GM10248 (cell line): ENCODE measurements at regions of chr14 and their contacts with region 1.

Region 1: GRCh38 chr14:30214461-30215090 is 286.9 kb upstream of the PRKD1 start:
- DNase-seq: peak; percentile 3
- CTCF ChIP-seq: peak; percentile 45

Region 2: GRCh38 chr14:28751467-28752058 is 1463.0 kb before region 1 on chr14:
- CTCF ChIA-PET with region 1: interaction called, 15 read pairs
- POLR2A ChIA-PET with region 1: no interaction called
- DNase-seq: no peak
- CTCF ChIP-seq: peak; percentile 77

Region 3: DNA sequence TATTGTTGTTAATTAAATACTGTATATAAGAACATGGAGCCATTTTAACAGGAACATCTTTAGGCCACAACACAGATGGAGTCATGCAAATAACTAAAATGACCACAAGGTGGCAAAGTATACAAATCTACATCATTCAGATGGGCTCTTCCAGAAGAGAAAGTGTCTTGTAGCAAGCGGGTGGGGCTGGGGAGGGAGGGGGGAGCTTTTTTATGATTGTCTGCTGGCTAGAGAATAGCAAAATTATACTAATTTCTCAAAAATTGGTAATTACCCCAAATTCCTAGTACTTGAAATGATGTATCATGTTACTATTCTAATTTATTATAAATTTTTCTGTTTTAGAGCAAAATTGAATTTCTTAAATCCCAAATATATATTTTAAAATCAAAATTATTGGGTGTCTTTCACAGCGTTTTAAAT is 665.6 kb before region 1 on chr14:
- CTCF ChIA-PET with region 1: interaction called, 19 read pairs
- POLR2A ChIA-PET with region 1: no interaction called
- DNase-seq: peak; percentile 27
- CTCF ChIP-seq: peak; percentile 42